T-cell (primary cell): ENCODE measurements at regions of chr1 and their contacts with region 1.

Region 1: DNA sequence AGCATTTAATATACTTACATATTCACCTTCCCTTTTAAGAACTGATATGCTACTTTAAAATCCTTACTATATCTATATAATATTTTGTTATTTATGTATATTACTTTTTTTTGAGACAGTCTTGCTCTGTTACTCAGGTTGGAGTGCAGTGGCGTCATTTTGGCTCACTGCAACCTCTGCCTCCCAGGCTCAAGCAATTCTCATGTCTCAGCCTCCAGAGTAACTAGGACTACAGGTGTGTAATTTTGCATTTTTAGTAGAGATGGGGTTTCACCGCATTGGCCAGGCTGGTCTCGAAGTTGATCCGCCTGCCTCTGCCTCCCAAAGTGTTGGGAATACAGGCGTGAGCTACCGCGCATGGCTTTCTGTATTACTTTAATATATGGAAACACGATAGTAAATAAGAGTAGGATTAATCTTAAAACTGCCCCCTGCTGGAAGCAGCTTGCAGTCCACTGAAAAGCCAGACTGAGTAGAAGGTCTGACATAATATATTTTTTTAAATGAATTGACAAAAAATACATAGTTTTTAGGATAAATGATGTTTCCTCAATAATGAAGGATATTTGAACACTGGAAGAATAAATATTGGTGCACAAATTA is 24.4 kb downstream of the RCAN3 start:
- DNase-seq: peak in 30 of 35 experiments; percentile 19 to 71 (median 46)
- ATAC-seq: peak in 3 of 4 experiments; percentile 58 to 72 (median 68)
- H3K4me3 ChIP-seq: no peak overlapping the region
- H3K4me3 Mint-ChIP-seq: no peak overlapping the region
- H3K27ac ChIP-seq: peak overlapping the region; percentile 2
- H3K27ac Mint-ChIP-seq: peak overlapping the region; percentile 68 to 86
- H3K4me1 ChIP-seq: peaks cover 18 to 27% of the 10 kb centered on the region in 2 experiments
- H3K4me1 Mint-ChIP-seq: peaks cover 69 to 75% (median 72%) of the 10 kb centered on the region in 3 donors
- H3K27me3 ChIP-seq: no peaks in the 10 kb centered on the region
- H3K27me3 Mint-ChIP-seq: no peaks in the 10 kb centered on the region

Region 2: DNA sequence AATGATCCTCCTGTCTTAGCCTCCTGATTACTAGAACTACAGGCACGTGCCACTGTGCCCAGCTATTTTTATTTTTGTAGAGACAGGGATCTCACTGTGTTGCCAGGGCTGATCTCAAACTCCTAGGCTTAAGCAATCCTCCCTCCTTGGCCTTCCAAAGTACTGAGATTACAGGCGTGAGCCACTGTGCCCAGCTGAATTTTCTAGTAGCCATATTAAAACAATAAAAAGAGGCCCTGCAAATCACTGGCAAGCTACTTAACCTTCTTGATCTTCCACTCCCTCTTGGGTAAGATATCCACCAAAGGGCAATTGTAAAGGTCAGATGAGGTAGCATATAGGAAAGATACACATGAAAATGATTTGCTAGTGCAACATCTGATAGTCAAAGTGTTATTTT is 481.3 kb before region 1 on chr1:
- CTCF ChIA-PET with region 1: no interaction called
- POLR2A ChIA-PET with region 1: no interaction called
- DNase-seq: no peak
- ATAC-seq: no peak
- H3K4me3 ChIP-seq: no peak overlapping the region
- H3K4me3 Mint-ChIP-seq: no peak overlapping the region
- H3K27ac ChIP-seq: no peak overlapping the region
- H3K27ac Mint-ChIP-seq: no peak overlapping the region
- H3K4me1 ChIP-seq: no peaks in the 10 kb centered on the region
- H3K4me1 Mint-ChIP-seq: no peaks in the 10 kb centered on the region
- H3K27me3 ChIP-seq: peaks cover 0 to 10% of the 10 kb centered on the region in 2 experiments
- H3K27me3 Mint-ChIP-seq: peaks cover 0 to 5% of the 10 kb centered on the region in 2 donors

Region 3: DNA sequence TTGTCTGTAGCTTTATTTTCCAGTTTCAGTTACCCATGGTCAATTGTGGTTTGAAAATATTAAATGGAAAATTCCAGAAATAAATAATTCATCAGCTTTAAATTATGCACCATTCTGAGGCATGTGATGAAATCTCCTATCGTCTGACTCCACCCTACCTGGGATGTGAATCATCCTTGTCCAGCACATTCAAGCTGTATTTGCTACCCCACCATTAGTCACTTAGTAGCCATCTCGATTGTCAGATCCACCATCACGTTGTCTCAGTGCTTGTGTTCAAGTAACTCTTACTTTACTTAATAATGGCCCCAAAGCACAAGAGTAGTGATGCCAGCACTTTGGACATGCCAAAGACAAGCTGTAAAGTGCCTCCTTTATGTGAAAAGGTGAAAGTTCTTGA is 117.5 kb before region 1 on chr1:
- CTCF ChIA-PET with region 1: interaction called, 11 to 59 read pairs
- POLR2A ChIA-PET with region 1: no interaction called
- DNase-seq: no peak
- ATAC-seq: no peak
- H3K4me3 ChIP-seq: no peak overlapping the region
- H3K4me3 Mint-ChIP-seq: no peak overlapping the region
- H3K27ac ChIP-seq: no peak overlapping the region
- H3K27ac Mint-ChIP-seq: no peak overlapping the region
- H3K4me1 ChIP-seq: peaks cover 8 to 14% of the 10 kb centered on the region in 2 experiments
- H3K4me1 Mint-ChIP-seq: peaks cover 19 to 23% (median 21%) of the 10 kb centered on the region in 3 donors
- H3K27me3 ChIP-seq: no peaks in the 10 kb centered on the region
- H3K27me3 Mint-ChIP-seq: no peaks in the 10 kb centered on the region

Region 4: GRCh38 chr1:24415334-24415909 is 111.6 kb before region 1 on chr1 and contains the start of gene NIPAL3:
- CTCF ChIA-PET with region 1: interaction called, 3 to 59 read pairs
- POLR2A ChIA-PET with region 1: interaction called in 1 of 2 experiments, 5 read pairs
- DNase-seq: peak; percentile 93 to 100 (median 98)
- ATAC-seq: peak; percentile 94 to 98 (median 96)
- H3K4me3 ChIP-seq: peak within 1 kb of the TSS; percentile 85 to 93
- H3K4me3 Mint-ChIP-seq: peak within 1 kb of the TSS; percentile 92 to 99 (median 93)
- H3K27ac ChIP-seq: peak within 1 kb of the TSS; percentile 56
- H3K27ac Mint-ChIP-seq: peak within 1 kb of the TSS; percentile 91 to 93
- H3K4me1 ChIP-seq: peaks cover 31 to 54% of the 10 kb centered on the region in 2 experiments
- H3K4me1 Mint-ChIP-seq: peaks cover 66 to 75% (median 72%) of the 10 kb centered on the region in 3 donors
- H3K27me3 ChIP-seq: no peaks in the 10 kb centered on the region
- H3K27me3 Mint-ChIP-seq: no peaks in the 10 kb centered on the region
- total RNA-seq, gene NIPAL3: 49.0 to 71.4 (median 59.7) TPM

Region 5: DNA sequence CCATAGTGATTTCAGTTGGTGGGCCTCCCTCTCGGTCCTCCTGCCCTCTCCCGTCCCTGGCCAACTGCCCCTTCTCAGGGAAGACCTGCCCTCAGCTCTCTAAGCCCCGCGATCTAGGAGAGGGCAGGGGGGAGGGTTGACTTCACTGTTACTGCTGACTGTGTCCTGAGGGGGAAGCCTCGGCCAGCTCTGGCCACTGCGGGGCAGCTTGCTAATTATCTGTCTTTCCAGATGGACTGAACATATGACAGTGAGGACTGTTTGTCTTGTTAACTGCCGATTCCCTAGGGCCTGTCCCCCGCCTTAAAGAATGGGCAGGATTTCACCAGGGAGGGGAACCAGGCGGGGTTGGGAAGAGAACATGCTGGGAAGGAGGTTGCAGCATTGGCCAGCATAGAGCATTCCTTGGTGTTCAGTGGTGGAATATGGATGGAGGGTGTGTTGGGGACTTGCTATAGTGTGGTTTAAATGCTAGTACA is 88.6 kb before region 1 on chr1:
- CTCF ChIA-PET with region 1: no interaction called
- POLR2A ChIA-PET with region 1: no interaction called
- DNase-seq: no peak
- ATAC-seq: no peak
- H3K4me3 ChIP-seq: no peak overlapping the region
- H3K4me3 Mint-ChIP-seq: no peak overlapping the region
- H3K27ac ChIP-seq: no peak overlapping the region
- H3K27ac Mint-ChIP-seq: peak overlapping the region in 1 of 2 donors; percentile 46
- H3K4me1 ChIP-seq: peaks cover 0 to 9% of the 10 kb centered on the region in 2 experiments
- H3K4me1 Mint-ChIP-seq: peaks cover 27 to 52% (median 34%) of the 10 kb centered on the region in 3 donors
- H3K27me3 ChIP-seq: no peaks in the 10 kb centered on the region
- H3K27me3 Mint-ChIP-seq: no peaks in the 10 kb centered on the region

Region 6: GRCh38 chr1:24486331-24487065 is 40.5 kb before region 1 on chr1:
- CTCF ChIA-PET with region 1: interaction called in 1 of 2 experiments, 10 read pairs
- POLR2A ChIA-PET with region 1: interaction called, 4 to 5 read pairs
- DNase-seq: peak in 21 of 35 experiments; percentile 15 to 78 (median 42)
- ATAC-seq: peak; percentile 63 to 73 (median 68)
- H3K4me3 ChIP-seq: peak overlapping the region in 1 of 2 donors; percentile 0
- H3K4me3 Mint-ChIP-seq: peak overlapping the region; percentile 37 to 70 (median 64)
- H3K27ac ChIP-seq: peak overlapping the region; percentile 71
- H3K27ac Mint-ChIP-seq: peak overlapping the region; percentile 90 to 98
- H3K4me1 ChIP-seq: peaks cover 57 to 76% of the 10 kb centered on the region in 2 experiments
- H3K4me1 Mint-ChIP-seq: peaks cover 77 to 79% (median 77%) of the 10 kb centered on the region in 3 donors
- H3K27me3 ChIP-seq: peaks cover 0 to 3% of the 10 kb centered on the region in 2 experiments
- H3K27me3 Mint-ChIP-seq: no peaks in the 10 kb centered on the region

Region 7: DNA sequence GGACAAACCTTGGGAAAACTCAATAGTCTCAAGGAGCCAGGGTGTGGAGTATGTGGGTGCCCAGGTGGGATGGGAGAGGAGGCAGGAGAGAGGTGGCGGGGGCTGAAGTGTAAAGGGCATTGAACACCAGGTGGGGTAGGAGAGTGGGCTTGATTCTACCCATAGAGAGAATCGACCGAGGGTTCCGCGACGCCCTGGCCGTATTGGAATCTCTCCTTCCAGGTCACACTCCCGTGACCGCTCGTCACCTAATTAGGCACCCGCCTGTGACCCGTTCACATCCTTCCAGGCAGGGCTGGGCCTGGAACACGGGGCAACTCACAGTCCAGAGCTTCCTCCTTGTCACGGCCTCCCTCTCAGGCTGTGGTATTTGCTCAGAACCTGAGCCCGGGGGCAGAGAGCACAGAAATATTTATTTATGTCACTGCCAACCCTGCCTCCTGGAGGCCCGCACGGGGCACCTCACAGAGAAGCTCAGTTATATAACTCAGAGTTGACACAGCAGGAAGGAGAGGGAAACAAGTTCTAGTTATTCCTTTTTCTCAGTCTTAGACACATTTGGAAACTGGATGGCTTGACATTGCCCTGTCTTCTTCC is 40.8 kb after region 1 on chr1:
- CTCF ChIA-PET with region 1: no interaction called
- POLR2A ChIA-PET with region 1: no interaction called
- DNase-seq: peak in 16 of 35 experiments; percentile 8 to 40 (median 18)
- ATAC-seq: peak in 3 of 4 experiments; percentile 47 to 69 (median 50)
- H3K4me3 ChIP-seq: no peak overlapping the region
- H3K4me3 Mint-ChIP-seq: no peak overlapping the region
- H3K27ac ChIP-seq: no peak overlapping the region
- H3K27ac Mint-ChIP-seq: no peak overlapping the region
- H3K4me1 ChIP-seq: peaks cover 0 to 7% of the 10 kb centered on the region in 2 experiments
- H3K4me1 Mint-ChIP-seq: peaks cover 11 to 18% (median 12%) of the 10 kb centered on the region in 3 donors
- H3K27me3 ChIP-seq: peaks cover 0 to 8% of the 10 kb centered on the region in 2 experiments
- H3K27me3 Mint-ChIP-seq: no peaks in the 10 kb centered on the region

Region 8: GRCh38 chr1:24586970-24587820 is 60.2 kb after region 1 on chr1:
- CTCF ChIA-PET with region 1: interaction called in 1 of 2 experiments, 16 read pairs
- POLR2A ChIA-PET with region 1: no interaction called
- DNase-seq: peak in 33 of 35 experiments; percentile 12 to 88 (median 50)
- ATAC-seq: peak; percentile 96 to 99 (median 98)
- H3K4me3 ChIP-seq: no peak overlapping the region
- H3K4me3 Mint-ChIP-seq: no peak overlapping the region
- H3K27ac ChIP-seq: peak overlapping the region; percentile 43
- H3K27ac Mint-ChIP-seq: peak overlapping the region; percentile 79 to 86
- H3K4me1 ChIP-seq: no peaks in the 10 kb centered on the region
- H3K4me1 Mint-ChIP-seq: peaks cover 6 to 9% (median 8%) of the 10 kb centered on the region in 3 donors
- H3K27me3 ChIP-seq: peaks cover 0 to 17% of the 10 kb centered on the region in 2 experiments
- H3K27me3 Mint-ChIP-seq: peaks cover 0 to 7% of the 10 kb centered on the region in 2 donors